Left colon (tissue), 2 donors: ENCODE measurements at regions of chr17 and their contacts with region 1.

Region 1: GRCh38 chr17:60049936-60050335 is 28.8 kb downstream of the HEATR6 start:
- DNase-seq: no peak
- ATAC-seq: no peak

Region 2: GRCh38 chr17:59676716-59677115 is 373.2 kb before region 1 on chr17:
- intact Hi-C with region 1: loop called in 1 of 2 experiments (anchors 10 kb)
- DNase-seq: no peak
- ATAC-seq: peak; percentile 27

Region 3: GRCh38 chr17:59786536-59787319 is 263.2 kb before region 1 on chr17:
- intact Hi-C with region 1: no loop called
- DNase-seq: peak; percentile 24 to 78
- ATAC-seq: peak; percentile 92

Region 4: GRCh38 chr17:59950049-59950448 is 99.9 kb before region 1 on chr17:
- intact Hi-C with region 1: loop called in 1 of 2 experiments (anchors 10 kb)
- DNase-seq: no peak
- ATAC-seq: no peak

Region 5: DNA sequence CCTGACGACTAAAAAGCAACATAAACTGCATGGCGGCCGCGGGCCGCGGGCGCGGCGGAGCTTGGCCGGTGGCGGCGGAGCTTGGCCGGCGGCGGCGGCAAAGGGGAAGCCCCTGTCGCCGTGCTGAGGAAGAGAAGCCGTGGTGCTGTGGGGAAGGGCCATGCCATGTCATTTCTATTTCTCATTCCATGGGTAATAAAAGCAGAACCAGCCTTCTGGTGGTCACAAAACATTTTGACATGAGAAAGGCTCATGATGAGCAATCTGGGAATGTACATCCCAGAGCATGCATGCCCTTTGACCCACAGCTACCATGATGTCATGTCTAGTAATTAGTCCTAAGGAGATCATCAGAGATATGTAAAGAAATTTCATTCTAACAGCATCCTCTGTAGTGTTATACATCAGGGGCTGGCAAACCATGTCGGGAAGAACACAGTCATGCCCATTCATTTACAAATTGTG is 52.7 kb after region 1 on chr17:
- intact Hi-C with region 1: no loop called
- DNase-seq: peak in 1 of 2 donors; percentile 39
- ATAC-seq: peak; percentile 83

Region 6: GRCh38 chr17:60599620-60600489 is 549.9 kb after region 1 on chr17 and contains the start of gene PPM1D:
- intact Hi-C with region 1: no loop called
- DNase-seq: peak; percentile 99 to 100
- ATAC-seq: peak; percentile 91
- total RNA-seq, gene PPM1D: 14.3 to 21.1 TPM